HEK293 (cell line): ENCODE measurements at regions of chr14 and their contacts with region 1.

Region 1: DNA sequence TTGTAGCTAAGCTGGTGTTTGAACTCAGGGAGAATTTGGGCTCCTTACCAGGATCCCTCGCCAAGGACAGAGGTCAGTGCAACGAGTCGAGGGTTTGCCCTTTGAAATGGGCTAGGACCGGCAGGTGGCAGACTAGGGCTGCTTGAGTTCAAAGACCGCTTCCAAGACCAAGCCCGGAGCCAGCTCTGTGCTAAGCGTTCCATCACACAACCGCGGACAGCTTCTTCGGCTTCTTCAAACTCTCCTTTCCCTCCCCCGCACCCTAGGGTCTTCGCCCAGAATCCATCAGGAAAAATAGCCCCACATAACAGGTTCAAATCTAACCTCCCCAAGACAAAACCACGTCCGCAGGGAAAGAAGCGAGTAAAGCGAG is 705 bp upstream of the FLVCR2 start:
- H3K4me3 ChIP-seq: peak overlapping the region; percentile 49
- H3K27ac ChIP-seq: no peak overlapping the region; the same call in 1 of the 2 replicates
- H3K4me1 ChIP-seq: peaks cover 4% of the 10 kb centered on the region; the same call in 1 of the 2 replicates
- CTCF ChIP-seq: peak; percentile 52

Region 2: GRCh38 chr14:75648066-75648838 is 70.5 kb after region 1 on chr14:
- CTCF ChIA-PET with region 1: interaction called, 266 read pairs
- POLR2A ChIA-PET with region 1: interaction called, 10 read pairs
- H3K4me3 ChIP-seq: no peak overlapping the region
- H3K27ac ChIP-seq: no peak overlapping the region
- H3K4me1 ChIP-seq: peaks cover 13% of the 10 kb centered on the region
- CTCF ChIP-seq: no peak

Region 3: GRCh38 chr14:75660630-75661494 is 83.1 kb after region 1 on chr14 and contains the starts of genes ERG28 and TTLL5:
- CTCF ChIA-PET with region 1: interaction called, 266 read pairs
- POLR2A ChIA-PET with region 1: interaction called, 19 read pairs
- H3K4me3 ChIP-seq: peak within 1 kb of the TSS; percentile 96
- H3K27ac ChIP-seq: peak within 1 kb of the TSS; percentile 79
- H3K4me1 ChIP-seq: peaks cover 3% of the 10 kb centered on the region; the same call in 1 of the 2 replicates
- CTCF ChIP-seq: no peak

Region 4: GRCh38 chr14:75982266-75983018 is 404.7 kb after region 1 on chr14:
- CTCF ChIA-PET with region 1: interaction called, 11 read pairs
- POLR2A ChIA-PET with region 1: no interaction called
- H3K4me3 ChIP-seq: peak overlapping the region; percentile 58
- H3K27ac ChIP-seq: peak overlapping the region; percentile 86
- H3K4me1 ChIP-seq: peaks cover 7% of the 10 kb centered on the region
- CTCF ChIP-seq: no peak